GM12878 (cell line): ENCODE measurements at regions of chr7 and their contacts with region 1.

Region 1: GRCh38 chr7:116122972-116123595 is 87.3 kb upstream of the TES start:
- DNase-seq: no peak
- ATAC-seq: peak; percentile 49; the same call in 2 of the 3 replicates
- H3K4me3 ChIP-seq: no peak overlapping the region
- H3K27ac ChIP-seq: no peak overlapping the region
- H3K4me1 ChIP-seq: no peaks in the 10 kb centered on the region; the same call in 1 of the 2 replicates
- H3K27me3 ChIP-seq: no peaks in the 10 kb centered on the region
- CTCF ChIP-seq: peak; percentile 54 to 71 (median 63); a peak in 5 of 6 replicates
- EP300 ChIP-seq: no peak
- POLR2A ChIP-seq: no peak
- RAD21 ChIP-seq: peak; percentile 85

Region 2: GRCh38 chr7:115910541-115911164 is 212.4 kb before region 1 on chr7:
- CTCF ChIA-PET with region 1: no interaction called
- POLR2A ChIA-PET with region 1: no interaction called
- RAD21 ChIA-PET with region 1: no interaction called
- SMC1A ChIA-PET with region 1: no interaction called
- in situ Hi-C with region 1: no loop called
- intact Hi-C with region 1: loop called (anchors 10 kb)
- DNase-seq: no peak
- ATAC-seq: peak; percentile 62
- H3K4me3 ChIP-seq: no peak overlapping the region
- H3K27ac ChIP-seq: no peak overlapping the region
- H3K4me1 ChIP-seq: no peaks in the 10 kb centered on the region
- H3K27me3 ChIP-seq: no peaks in the 10 kb centered on the region; a peak in 1 of 4 replicates
- CTCF ChIP-seq: peak; percentile 43 to 63 (median 54); a peak in 4 of 6 replicates
- EP300 ChIP-seq: no peak
- POLR2A ChIP-seq: no peak
- RAD21 ChIP-seq: peak; percentile 74